ENCODE measurements at regions of chr6 and their contacts with region 1.

Region 1: GRCh38 chr6:167485186-167485978 is 160.5 kb downstream of the TTLL2 start:
- DNase-seq: peak in 1 of 5 donors; percentile 51
- ATAC-seq: peak; percentile 65 to 91 (median 80)
- H3K4me3 ChIP-seq: no peak overlapping the region
- H3K27ac ChIP-seq: no peak overlapping the region
- H3K4me1 ChIP-seq: peaks cover 0 to 13% (median 0%) of the 10 kb centered on the region in 12 donors
- H3K27me3 ChIP-seq: no peaks in the 10 kb centered on the region
- CTCF ChIP-seq: peak; percentile 38 to 76 (median 63)
- POLR2A ChIP-seq: no peak

Region 2: GRCh38 chr6:167679790-167680604 is 194.6 kb after region 1 on chr6:
- intact Hi-C with region 1: loop called in 1 of 10 experiments (anchors 2 kb)
- DNase-seq: no peak
- ATAC-seq: no peak
- H3K4me3 ChIP-seq: no peak overlapping the region
- H3K27ac ChIP-seq: no peak overlapping the region
- H3K4me1 ChIP-seq: peaks cover 2 to 76% (median 61%) of the 10 kb centered on the region in 12 donors
- H3K27me3 ChIP-seq: peaks cover 0 to 20% (median 0%) of the 10 kb centered on the region in 9 donors
- CTCF ChIP-seq: no peak
- POLR2A ChIP-seq: no peak

Region 3: DNA sequence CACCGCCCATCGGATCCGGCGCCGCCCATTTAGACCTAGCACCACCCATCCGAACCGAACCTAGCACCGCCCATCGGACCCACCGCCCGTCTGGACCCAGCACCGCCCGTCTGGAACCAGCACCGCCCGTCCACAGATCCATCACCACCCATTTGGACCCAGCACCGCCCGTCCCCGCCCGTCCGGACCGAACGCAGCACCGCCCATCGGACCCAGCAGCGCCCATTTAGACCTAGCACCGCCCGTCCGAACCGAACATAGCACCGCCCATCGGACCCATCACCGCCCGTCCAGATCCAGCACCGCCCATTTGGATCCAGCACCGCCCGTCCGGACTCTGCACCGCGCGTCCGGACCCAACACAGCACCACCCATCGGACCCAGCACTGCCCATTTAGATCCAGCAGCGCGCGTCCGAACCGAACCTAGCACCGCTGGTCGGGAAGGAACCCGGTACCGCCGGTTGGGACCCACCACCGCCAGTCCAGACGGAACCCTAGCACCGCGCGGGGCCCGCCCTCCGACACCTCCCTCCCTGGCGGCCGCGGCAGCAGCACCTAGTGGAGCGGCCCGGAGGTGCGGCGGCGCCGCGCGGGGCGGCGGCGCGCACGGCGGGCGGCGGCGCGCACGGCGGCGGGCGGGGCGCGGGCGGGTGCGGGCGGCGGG is 341.0 kb after region 1 on chr6:
- intact Hi-C with region 1: loop called in 1 of 10 experiments (anchors 10 kb)
- DNase-seq: peak; percentile 77 to 83 (median 79)
- ATAC-seq: peak; percentile 85 to 94 (median 92)
- H3K4me3 ChIP-seq: peak overlapping the region; percentile 54 to 90 (median 76)
- H3K27ac ChIP-seq: peak overlapping the region in 8 of 12 donors; percentile 17 to 75 (median 58)
- H3K4me1 ChIP-seq: peaks cover 0 to 46% (median 22%) of the 10 kb centered on the region in 12 donors
- H3K27me3 ChIP-seq: peaks cover 0 to 26% (median 0%) of the 10 kb centered on the region in 9 donors
- CTCF ChIP-seq: peak; percentile 14 to 57 (median 42)
- POLR2A ChIP-seq: no peak

Region 4: GRCh38 chr6:167892835-167893815 is 407.7 kb after region 1 on chr6:
- intact Hi-C with region 1: loop called (anchors 2 to 5 kb)
- DNase-seq: no peak
- ATAC-seq: no peak
- H3K4me3 ChIP-seq: no peak overlapping the region
- H3K27ac ChIP-seq: no peak overlapping the region
- H3K4me1 ChIP-seq: peaks cover 0 to under 1% (median 0%) of the 10 kb centered on the region in 12 donors
- H3K27me3 ChIP-seq: no peaks in the 10 kb centered on the region
- CTCF ChIP-seq: no peak
- POLR2A ChIP-seq: no peak

Measured in heart left ventricle (tissue), 16 donors.